ENCODE measurements at regions of chr2 and their contacts with region 1.

Region 1: DNA sequence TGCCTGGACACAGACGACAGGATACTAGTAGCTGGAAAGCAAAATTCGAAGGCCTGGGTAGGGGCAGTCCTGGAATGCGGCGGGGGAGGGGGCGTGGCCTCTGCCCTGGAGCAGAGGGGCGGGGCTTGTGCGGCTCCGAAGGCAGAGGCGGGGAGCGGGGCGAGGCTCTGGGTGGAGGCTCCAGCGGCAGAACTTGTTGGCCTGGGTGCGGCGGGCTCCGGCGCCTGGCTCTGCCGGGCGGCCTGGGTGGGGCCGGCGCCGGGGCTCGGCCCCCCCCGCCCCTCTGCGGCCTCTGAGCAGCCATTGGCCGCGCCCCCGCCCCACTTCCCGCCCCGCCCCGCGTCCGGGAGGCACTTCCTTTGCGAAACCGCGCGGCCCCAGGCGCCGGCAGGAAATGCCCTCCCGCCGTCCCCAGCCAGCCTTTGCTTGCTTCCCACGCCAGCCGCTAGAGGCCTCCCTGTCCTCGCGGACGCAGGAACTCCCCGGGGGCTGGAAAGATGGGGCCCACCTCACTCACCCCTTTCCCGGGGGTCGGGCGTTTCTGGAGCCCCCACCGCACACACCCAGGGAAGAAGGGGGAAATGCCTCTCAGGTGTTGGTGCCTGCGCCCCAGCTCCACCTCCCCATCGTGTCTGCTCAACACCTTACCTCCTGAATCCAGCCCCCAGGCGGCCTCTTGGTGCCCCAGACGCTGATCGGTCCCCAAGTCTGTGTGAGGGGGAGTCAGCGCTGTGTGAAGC is 6.7 kb downstream of the CTDSP1 start:
- DNase-seq: peak; percentile 100
- H3K4me3 ChIP-seq: peak overlapping the region; percentile 25 to 69 (median 39)
- H3K27ac ChIP-seq: peak overlapping the region; percentile 77 to 100 (median 88)
- H3K4me1 ChIP-seq: peaks cover 37 to 70% (median 65%) of the 10 kb centered on the region in 6 donors
- H3K27me3 ChIP-seq: no peaks in the 10 kb centered on the region
- CTCF ChIP-seq: peak; percentile 63 to 92 (median 85)
- POLR2A ChIP-seq: no peak

Region 2: DNA sequence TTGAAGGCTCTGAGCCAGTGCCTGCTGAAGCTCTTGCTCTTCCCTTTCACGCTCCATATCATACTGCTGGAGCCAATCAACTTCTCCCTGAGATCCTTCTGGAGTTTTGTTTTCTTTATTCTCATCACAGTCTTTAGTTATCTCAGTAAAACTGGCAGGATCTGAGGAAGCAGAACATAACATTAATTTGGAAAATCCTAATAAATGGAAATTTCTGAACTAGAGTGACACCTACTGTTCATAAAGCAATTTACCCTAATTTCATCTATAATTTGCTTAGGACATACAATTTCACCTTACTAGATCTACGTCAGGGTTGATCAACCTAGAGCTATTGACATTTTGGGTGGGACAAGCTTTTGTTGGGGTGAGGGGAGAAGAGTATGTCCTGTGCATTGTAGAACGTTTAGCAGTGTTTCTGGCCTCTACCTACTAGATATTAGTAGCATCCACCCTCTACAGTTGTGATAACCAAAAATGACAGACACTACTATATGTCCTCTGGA is 59.7 kb after region 1 on chr2:
- intact Hi-C with region 1: loop called (anchors 5 kb)
- DNase-seq: no peak
- H3K4me3 ChIP-seq: no peak overlapping the region
- H3K27ac ChIP-seq: no peak overlapping the region
- H3K4me1 ChIP-seq: peaks cover 0 to 19% (median 7%) of the 10 kb centered on the region in 6 donors
- H3K27me3 ChIP-seq: no peaks in the 10 kb centered on the region
- CTCF ChIP-seq: peak in 9 of 11 experiments; percentile 6 to 65 (median 49)
- POLR2A ChIP-seq: no peak

Region 3: DNA sequence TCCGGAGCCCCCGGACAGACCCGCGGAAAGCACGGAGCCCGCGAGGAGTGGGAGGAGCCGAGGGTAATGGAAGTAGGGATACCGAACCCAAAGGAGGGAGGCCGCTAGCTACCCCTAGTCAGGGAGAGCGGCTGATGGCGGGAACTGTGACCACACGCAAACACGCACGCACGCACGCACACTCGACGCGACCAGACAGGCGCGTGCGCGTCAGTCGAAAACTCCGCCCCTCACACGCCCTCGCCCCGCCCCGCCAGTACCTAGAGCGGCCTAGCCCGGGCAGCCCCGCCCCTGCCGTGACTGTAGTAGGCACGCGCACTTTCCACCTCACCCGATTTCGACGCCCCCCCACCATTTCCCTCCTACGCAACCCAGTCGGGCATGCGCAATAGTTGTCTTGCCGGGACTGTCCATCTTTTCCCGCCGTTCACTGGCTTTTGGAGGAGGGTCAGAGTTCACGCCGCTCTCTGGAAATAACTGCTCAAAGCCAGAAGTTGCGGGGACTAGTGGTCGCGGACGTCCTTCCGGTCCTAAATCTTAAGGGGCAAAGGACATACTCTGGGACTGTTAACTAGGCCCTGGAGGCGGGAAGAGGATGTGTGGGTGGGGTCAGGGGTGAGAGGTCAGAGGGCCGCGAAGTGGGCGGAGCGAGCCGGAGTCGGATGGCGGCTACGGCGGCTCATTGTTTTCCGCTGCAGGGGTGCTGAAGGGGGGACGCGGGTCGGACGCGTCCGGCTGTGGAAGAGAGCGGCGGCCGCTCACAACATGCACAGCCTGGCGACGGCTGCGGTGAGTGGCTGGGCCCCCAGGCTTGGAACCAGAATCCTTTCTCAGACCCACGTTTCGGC is 162.0 kb after region 1 on chr2 and contains the starts of genes CNOT9 and USP37:
- intact Hi-C with region 1: loop called (anchors 10 kb)
- DNase-seq: peak; percentile 100
- H3K4me3 ChIP-seq: peak within 1 kb of the TSS; percentile 52 to 93 (median 84)
- H3K27ac ChIP-seq: peak within 1 kb of the TSS; percentile 89 to 97 (median 95)
- H3K4me1 ChIP-seq: peaks cover 29 to 88% (median 56%) of the 10 kb centered on the region in 6 donors
- H3K27me3 ChIP-seq: no peaks in the 10 kb centered on the region
- CTCF ChIP-seq: peak in 5 of 11 experiments; percentile 2 to 38 (median 27)
- POLR2A ChIP-seq: peak in 2 of 3 donors; percentile 20 to 85
- total RNA-seq, gene CNOT9: 40.4 to 61.6 (median 46.7) TPM
- total RNA-seq, gene USP37: 13.0 to 19.2 (median 14.8) TPM

Region 4: DNA sequence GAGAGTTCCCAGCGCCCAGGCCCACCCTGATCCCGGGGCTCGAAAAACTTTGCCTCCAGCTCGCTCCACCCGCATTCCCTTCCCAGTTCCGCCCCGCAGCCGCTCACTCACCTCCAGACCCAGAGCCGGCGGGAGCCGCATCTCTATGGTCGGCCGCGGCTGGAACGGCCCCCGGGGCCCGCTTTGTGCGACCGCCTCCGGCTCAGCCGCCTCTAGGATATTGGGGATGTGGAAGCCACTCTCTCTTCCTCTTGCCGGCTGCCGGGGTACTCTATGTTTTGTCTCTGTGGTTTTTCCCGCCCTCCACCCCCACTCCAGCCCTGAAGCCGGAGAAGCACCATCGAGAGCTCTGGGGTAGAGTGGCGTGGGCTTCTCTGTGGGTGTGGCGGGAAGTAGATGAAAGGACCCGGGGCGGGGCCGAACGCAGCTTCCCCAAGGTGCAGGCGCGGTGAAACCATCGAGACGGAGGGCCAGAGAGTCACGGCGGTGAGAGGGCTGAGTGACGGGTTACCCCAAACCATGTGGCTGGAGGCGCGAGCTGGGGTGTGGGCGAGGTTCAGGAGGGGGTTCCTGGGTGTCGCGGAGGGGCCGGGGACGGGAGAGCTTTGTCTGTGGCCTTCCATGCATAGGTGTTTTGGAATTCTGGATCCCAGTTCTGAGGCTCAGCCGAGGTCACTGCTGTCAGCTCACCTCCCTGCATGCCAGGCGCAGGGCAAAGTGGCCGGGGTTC is 253.0 kb after region 1 on chr2 and contains the starts of genes BCS1L and ZNF142:
- intact Hi-C with region 1: loop called (anchors 5 kb)
- DNase-seq: peak; percentile 98
- H3K4me3 ChIP-seq: peak within 1 kb of the TSS; percentile 84 to 100 (median 96)
- H3K27ac ChIP-seq: peak within 1 kb of the TSS; percentile 40 to 90 (median 78)
- H3K4me1 ChIP-seq: peaks cover 16 to 55% (median 22%) of the 10 kb centered on the region in 6 donors
- H3K27me3 ChIP-seq: no peaks in the 10 kb centered on the region
- CTCF ChIP-seq: no peak
- POLR2A ChIP-seq: peak in 1 of 3 donors; percentile 12
- total RNA-seq, gene BCS1L: 16.4 to 39.4 (median 29.5) TPM
- total RNA-seq, gene ZNF142: 27.7 to 33.0 (median 31.6) TPM